Mammary epithelial cell (primary cell): ENCODE measurements at regions of chr17 and their contacts with region 1.

Region 1: GRCh38 chr17:5942687-5943086 is 127.5 kb upstream of the WSCD1 start:
- DNase-seq: no peak
- H3K4me3 ChIP-seq: no peak overlapping the region
- H3K27ac ChIP-seq: no peak overlapping the region
- H3K4me1 ChIP-seq: no peaks in the 10 kb centered on the region
- H3K27me3 ChIP-seq: peaks cover 12% of the 10 kb centered on the region
- CTCF ChIP-seq: no peak

Region 2: GRCh38 chr17:5785867-5786509 is 156.7 kb before region 1 on chr17:
- CTCF ChIA-PET with region 1: no interaction called
- dilution Hi-C with region 1: no loop called
- in situ Hi-C with region 1: no loop called
- intact Hi-C with region 1: no loop called
- DNase-seq: peak; percentile 39
- H3K4me3 ChIP-seq: no peak overlapping the region
- H3K27ac ChIP-seq: no peak overlapping the region
- H3K4me1 ChIP-seq: peaks cover 9% of the 10 kb centered on the region
- H3K27me3 ChIP-seq: peaks cover 9% of the 10 kb centered on the region
- CTCF ChIP-seq: no peak

Region 3: GRCh38 chr17:6126768-6127167 is 184.1 kb after region 1 on chr17:
- CTCF ChIA-PET with region 1: no interaction called
- dilution Hi-C with region 1: loop called (anchors 10 kb)
- in situ Hi-C with region 1: no loop called
- intact Hi-C with region 1: no loop called
- DNase-seq: no peak
- H3K4me3 ChIP-seq: no peak overlapping the region
- H3K27ac ChIP-seq: no peak overlapping the region
- H3K4me1 ChIP-seq: no peaks in the 10 kb centered on the region
- H3K27me3 ChIP-seq: no peaks in the 10 kb centered on the region
- CTCF ChIP-seq: no peak